CD4-positive, alpha-beta memory T cell (primary cell): ENCODE measurements at regions of chr6 and their contacts with region 1.

Region 1: DNA sequence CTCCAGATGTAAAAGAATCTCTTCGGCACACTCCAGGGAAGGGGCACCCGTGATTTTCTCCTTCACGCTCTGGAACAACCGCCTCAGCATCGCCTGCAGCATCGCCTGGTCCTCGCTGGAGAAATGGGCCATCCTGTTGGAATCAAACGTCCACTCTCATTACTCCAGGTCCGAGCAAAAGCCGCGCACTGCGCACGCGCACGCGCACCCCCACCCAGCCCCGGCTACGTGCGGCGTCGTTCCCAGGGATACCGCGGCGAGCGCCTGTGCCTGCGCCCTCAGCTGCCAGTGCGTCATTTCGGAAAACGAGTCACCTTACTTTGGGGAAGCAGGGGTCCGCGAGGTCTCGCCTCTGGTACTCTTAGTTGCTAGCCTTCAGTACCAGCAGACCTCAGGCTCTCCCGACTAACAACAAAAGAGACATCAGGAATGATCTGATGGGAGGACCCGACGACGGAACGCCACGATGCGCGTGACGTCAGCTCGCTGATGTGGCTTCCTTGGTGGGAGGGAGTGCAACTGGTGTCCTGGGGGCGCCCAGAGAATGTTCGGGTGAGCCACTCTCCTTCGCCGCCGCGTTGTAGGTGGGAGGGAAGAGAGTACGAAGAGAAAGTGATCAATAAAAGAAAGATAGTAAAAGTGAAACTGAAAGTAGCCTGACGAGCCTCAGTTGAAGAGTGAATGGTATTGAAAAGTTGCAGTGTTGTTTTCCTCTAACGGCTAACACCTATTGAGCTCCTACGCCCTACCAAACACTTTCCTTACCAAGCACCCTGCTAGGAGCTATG is at the start of gene TBC1D32:
- DNase-seq: peak; percentile 87 to 91 (median 89)
- H3K4me3 ChIP-seq: peak within 1 kb of the TSS; percentile 91 to 96
- H3K4me3 Mint-ChIP-seq: peak within 1 kb of the TSS; percentile 93 to 99 (median 97)
- H3K27ac ChIP-seq: peak within 1 kb of the TSS; percentile 98
- H3K27ac Mint-ChIP-seq: peak within 1 kb of the TSS; percentile 95 to 100 (median 99)
- H3K4me1 ChIP-seq: peaks cover 29% of the 10 kb centered on the region
- H3K4me1 Mint-ChIP-seq: peaks cover 14 to 38% (median 23%) of the 10 kb centered on the region in 4 donors
- H3K27me3 ChIP-seq: no peaks in the 10 kb centered on the region
- H3K27me3 Mint-ChIP-seq: no peaks in the 10 kb centered on the region
- total RNA-seq, gene TBC1D32: 11.2 to 13.2 TPM

Region 2: DNA sequence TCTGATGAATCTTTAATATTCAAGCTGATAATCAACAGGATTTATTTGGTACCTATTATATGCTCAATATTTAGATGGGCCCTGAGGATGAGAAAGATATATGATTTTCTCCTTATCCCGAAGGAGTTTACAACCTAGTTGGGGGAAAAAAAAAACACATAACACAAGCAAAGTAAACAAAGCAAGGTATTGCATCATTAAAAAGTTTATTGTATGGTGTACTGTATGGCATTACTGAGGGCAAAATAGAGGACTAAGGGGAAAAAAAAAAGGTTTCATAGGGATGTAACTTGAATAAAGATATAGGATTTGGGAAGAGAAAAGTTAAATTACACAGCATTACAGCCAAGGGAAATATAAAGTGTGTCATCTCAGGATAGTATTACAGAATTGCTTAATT is 574.9 kb before region 1 on chr6:
- CTCF ChIA-PET with region 1: no interaction called
- POLR2A ChIA-PET with region 1: no interaction called
- intact Hi-C with region 1: no loop called
- DNase-seq: no peak
- H3K4me3 ChIP-seq: no peak overlapping the region
- H3K4me3 Mint-ChIP-seq: no peak overlapping the region
- H3K27ac ChIP-seq: no peak overlapping the region
- H3K27ac Mint-ChIP-seq: no peak overlapping the region
- H3K4me1 ChIP-seq: no peaks in the 10 kb centered on the region
- H3K4me1 Mint-ChIP-seq: no peaks in the 10 kb centered on the region
- H3K27me3 ChIP-seq: no peaks in the 10 kb centered on the region
- H3K27me3 Mint-ChIP-seq: no peaks in the 10 kb centered on the region

Region 3: GRCh38 chr6:121399966-121400365 is 65.5 kb after region 1 on chr6:
- CTCF ChIA-PET with region 1: interaction called, 3 read pairs
- POLR2A ChIA-PET with region 1: no interaction called
- intact Hi-C with region 1: loop called (anchors 2 kb)
- DNase-seq: no peak
- H3K4me3 ChIP-seq: no peak overlapping the region
- H3K4me3 Mint-ChIP-seq: no peak overlapping the region
- H3K27ac ChIP-seq: no peak overlapping the region
- H3K27ac Mint-ChIP-seq: no peak overlapping the region
- H3K4me1 ChIP-seq: no peaks in the 10 kb centered on the region
- H3K4me1 Mint-ChIP-seq: no peaks in the 10 kb centered on the region
- H3K27me3 ChIP-seq: no peaks in the 10 kb centered on the region
- H3K27me3 Mint-ChIP-seq: peaks cover 3 to 9% of the 10 kb centered on the region in 2 donors

Region 4: DNA sequence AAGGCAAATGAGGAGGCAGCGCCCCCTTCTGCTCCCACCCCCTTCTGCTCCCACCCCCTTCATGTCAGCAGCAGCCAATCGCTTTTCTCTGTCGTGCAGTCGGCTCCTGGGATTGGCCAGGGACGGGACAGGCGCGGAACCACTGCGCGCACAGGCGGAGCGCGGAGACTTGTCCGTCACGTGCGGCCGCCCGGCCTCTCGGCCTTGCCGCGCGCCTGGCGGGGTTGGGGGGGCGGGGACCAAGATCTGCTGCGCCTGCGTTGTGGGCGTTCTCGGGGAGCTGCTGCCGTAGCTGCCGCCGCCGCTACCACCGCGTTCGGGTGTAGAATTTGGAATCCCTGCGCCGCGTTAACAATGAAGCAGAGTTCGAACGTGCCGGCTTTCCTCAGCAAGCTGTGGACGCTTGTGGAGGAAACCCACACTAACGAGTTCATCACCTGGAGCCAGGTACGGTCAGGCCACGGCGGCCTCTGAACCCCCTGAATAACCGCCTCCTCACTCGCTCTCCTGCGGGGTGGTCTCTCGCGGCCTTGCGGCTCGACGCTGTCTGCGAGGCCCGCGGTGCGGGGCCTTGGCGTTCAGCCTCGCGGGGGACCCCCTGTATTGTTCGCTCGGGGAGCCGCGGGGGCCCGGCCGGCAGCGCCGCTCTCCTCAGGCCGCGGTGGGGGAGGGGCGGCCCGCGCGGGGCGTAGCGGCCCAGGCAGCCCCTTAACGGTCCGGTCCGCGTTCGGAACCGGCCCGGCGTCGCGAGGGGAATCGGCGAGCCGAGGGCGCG is 1065.1 kb after region 1 on chr6 and contains the start of gene HSF2:
- CTCF ChIA-PET with region 1: no interaction called
- POLR2A ChIA-PET with region 1: no interaction called
- intact Hi-C with region 1: loop called (anchors 2 kb)
- DNase-seq: peak; percentile 92 to 96 (median 94)
- H3K4me3 ChIP-seq: peak within 1 kb of the TSS; percentile 39 to 91
- H3K4me3 Mint-ChIP-seq: peak within 1 kb of the TSS; percentile 96 to 100 (median 98)
- H3K27ac ChIP-seq: peak within 1 kb of the TSS; percentile 88
- H3K27ac Mint-ChIP-seq: peak within 1 kb of the TSS; percentile 92 to 99 (median 97)
- H3K4me1 ChIP-seq: peaks cover 36% of the 10 kb centered on the region
- H3K4me1 Mint-ChIP-seq: peaks cover 27 to 37% (median 31%) of the 10 kb centered on the region in 4 donors
- H3K27me3 ChIP-seq: no peaks in the 10 kb centered on the region
- H3K27me3 Mint-ChIP-seq: no peaks in the 10 kb centered on the region
- total RNA-seq, gene HSF2: 15.7 to 17.4 TPM